B cell (primary cell): ENCODE measurements at regions of chr2 and their contacts with region 1.

Region 1: GRCh38 chr2:136135921-136136906 is 18.3 kb upstream of the CXCR4 start:
- DNase-seq: peak; percentile 94
- ATAC-seq: peak; percentile 50
- H3K4me3 ChIP-seq: peak overlapping the region in 3 of 5 experiments; percentile 10 to 33 (median 10)
- H3K4me3 Mint-ChIP-seq: peak overlapping the region; percentile 83
- H3K27ac ChIP-seq: peak overlapping the region; percentile 98 to 99
- H3K27ac Mint-ChIP-seq: peak overlapping the region; percentile 96
- H3K4me1 ChIP-seq: peaks cover 94 to 98% of the 10 kb centered on the region in 2 donors
- H3K4me1 Mint-ChIP-seq: peaks cover 92% of the 10 kb centered on the region
- H3K27me3 ChIP-seq: no peaks in the 10 kb centered on the region
- H3K27me3 Mint-ChIP-seq: no peaks in the 10 kb centered on the region
- CTCF ChIP-seq: no peak

Region 2: DNA sequence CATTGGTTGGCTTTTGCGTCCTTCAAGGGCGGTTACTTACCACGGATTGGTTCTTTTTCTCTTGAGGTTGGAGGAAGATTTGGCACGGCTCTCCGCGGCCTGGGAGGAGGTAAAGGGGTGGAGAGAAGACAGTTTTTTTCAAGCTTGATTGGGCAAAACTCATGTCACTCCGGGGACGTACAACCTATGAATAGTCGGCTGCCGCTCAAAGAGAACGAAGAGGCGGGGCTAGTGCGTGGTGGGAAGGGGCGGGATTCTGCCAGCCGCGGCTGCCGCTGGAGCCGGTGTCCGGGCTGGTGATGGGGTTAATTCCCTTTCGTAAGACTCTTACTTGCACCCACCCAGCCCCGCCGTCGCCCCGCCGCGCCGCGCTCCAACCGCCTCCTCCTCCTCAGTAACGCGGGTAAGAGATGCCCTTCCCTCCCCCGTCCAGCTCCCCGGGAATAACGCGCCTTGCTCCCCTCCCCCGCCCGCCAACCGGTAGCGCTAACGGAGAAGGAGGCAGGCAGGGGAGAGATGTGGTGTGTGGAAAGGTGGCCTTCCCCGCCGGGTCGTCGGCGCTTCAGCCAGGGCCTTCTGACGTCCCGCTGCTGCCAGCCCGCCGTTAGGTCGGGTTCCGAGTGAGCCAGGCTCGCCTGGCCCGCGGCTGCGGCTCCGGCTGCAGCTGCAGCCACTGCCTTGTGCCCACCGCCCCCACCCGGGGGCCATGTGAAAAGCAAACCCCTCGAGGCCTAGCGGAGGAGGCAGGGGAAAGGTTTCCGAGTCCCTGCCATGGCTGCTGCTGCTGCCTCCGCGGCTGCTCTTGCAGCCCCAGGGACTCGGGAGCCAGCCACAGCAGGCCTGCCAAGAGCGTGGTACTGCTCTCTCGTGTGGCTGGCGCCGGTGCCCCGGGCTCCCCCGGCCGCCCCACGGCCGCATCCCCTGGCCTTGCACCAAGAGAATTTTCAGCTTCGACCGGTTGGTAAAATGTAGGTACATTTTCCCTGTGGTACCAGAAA is 604.7 kb before region 1 on chr2 and contains the start of gene R3HDM1:
- CTCF ChIA-PET with region 1: no interaction called
- POLR2A ChIA-PET with region 1: no interaction called
- intact Hi-C with region 1: loop called (anchors 10 kb)
- DNase-seq: peak; percentile 99
- ATAC-seq: peak; percentile 79
- H3K4me3 ChIP-seq: peak within 1 kb of the TSS; percentile 81 to 100 (median 91)
- H3K4me3 Mint-ChIP-seq: no peak within 1 kb of the TSS
- H3K27ac ChIP-seq: peak within 1 kb of the TSS; percentile 86 to 88
- H3K27ac Mint-ChIP-seq: peak within 1 kb of the TSS; percentile 81
- H3K4me1 ChIP-seq: peaks cover 13 to 14% of the 10 kb centered on the region in 2 donors
- H3K4me1 Mint-ChIP-seq: peaks cover 12% of the 10 kb centered on the region
- H3K27me3 ChIP-seq: no peaks in the 10 kb centered on the region
- H3K27me3 Mint-ChIP-seq: no peaks in the 10 kb centered on the region
- CTCF ChIP-seq: peak; percentile 21
- total RNA-seq, gene R3HDM1: 52.0 and 57.8 TPM in 2 replicates

Region 3: DNA sequence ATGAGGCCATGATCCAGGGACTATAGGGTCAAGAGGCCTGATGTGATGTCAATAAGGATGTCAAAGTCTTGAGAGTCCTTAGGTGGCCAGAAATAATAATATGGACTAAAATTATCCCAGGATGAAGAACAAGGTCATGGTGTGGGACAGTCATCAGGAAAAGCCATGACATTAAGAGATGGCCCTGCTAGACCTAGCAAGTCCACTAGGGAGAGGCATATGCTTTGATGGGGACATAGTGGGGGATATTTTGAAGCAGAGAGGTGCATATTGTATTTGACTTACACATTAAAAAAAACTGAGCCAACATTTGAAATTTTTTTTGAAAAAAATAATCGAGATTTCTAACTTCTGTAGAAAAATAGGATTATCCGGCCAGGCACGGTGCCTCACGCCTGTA is 35.0 kb after region 1 on chr2:
- CTCF ChIA-PET with region 1: interaction called, 3 read pairs
- POLR2A ChIA-PET with region 1: interaction called, 4 read pairs
- intact Hi-C with region 1: loop called (anchors 5 kb)
- DNase-seq: no peak
- ATAC-seq: peak; percentile 39
- H3K4me3 ChIP-seq: no peak overlapping the region
- H3K4me3 Mint-ChIP-seq: no peak overlapping the region
- H3K27ac ChIP-seq: no peak overlapping the region
- H3K27ac Mint-ChIP-seq: peak overlapping the region; percentile 38
- H3K4me1 ChIP-seq: peaks cover 10 to 12% of the 10 kb centered on the region in 2 donors
- H3K4me1 Mint-ChIP-seq: peaks cover 40% of the 10 kb centered on the region
- H3K27me3 ChIP-seq: no peaks in the 10 kb centered on the region
- H3K27me3 Mint-ChIP-seq: no peaks in the 10 kb centered on the region
- CTCF ChIP-seq: no peak

Region 4: GRCh38 chr2:136212423-136213378 is 76.5 kb after region 1 on chr2:
- CTCF ChIA-PET with region 1: interaction called, 55 read pairs
- POLR2A ChIA-PET with region 1: interaction called, 218 read pairs
- intact Hi-C with region 1: loop called (anchors 1 kb)
- DNase-seq: peak; percentile 81
- ATAC-seq: peak; percentile 74
- H3K4me3 ChIP-seq: no peak overlapping the region
- H3K4me3 Mint-ChIP-seq: peak overlapping the region; percentile 74
- H3K27ac ChIP-seq: peak overlapping the region; percentile 53 to 99
- H3K27ac Mint-ChIP-seq: peak overlapping the region; percentile 81
- H3K4me1 ChIP-seq: peaks cover 80 to 81% of the 10 kb centered on the region in 2 donors
- H3K4me1 Mint-ChIP-seq: peaks cover 96% of the 10 kb centered on the region
- H3K27me3 ChIP-seq: no peaks in the 10 kb centered on the region
- H3K27me3 Mint-ChIP-seq: no peaks in the 10 kb centered on the region
- CTCF ChIP-seq: no peak

Region 5: GRCh38 chr2:136225950-136226835 is 90.0 kb after region 1 on chr2:
- CTCF ChIA-PET with region 1: interaction called, 15 read pairs
- POLR2A ChIA-PET with region 1: interaction called, 39 read pairs
- intact Hi-C with region 1: no loop called
- DNase-seq: peak; percentile 88
- ATAC-seq: peak; percentile 84
- H3K4me3 ChIP-seq: no peak overlapping the region
- H3K4me3 Mint-ChIP-seq: peak overlapping the region; percentile 42
- H3K27ac ChIP-seq: peak overlapping the region; percentile 62 to 75
- H3K27ac Mint-ChIP-seq: peak overlapping the region; percentile 95
- H3K4me1 ChIP-seq: peaks cover 46 to 54% of the 10 kb centered on the region in 2 donors
- H3K4me1 Mint-ChIP-seq: peaks cover 75% of the 10 kb centered on the region
- H3K27me3 ChIP-seq: no peaks in the 10 kb centered on the region
- H3K27me3 Mint-ChIP-seq: no peaks in the 10 kb centered on the region
- CTCF ChIP-seq: no peak

Region 6: GRCh38 chr2:136378712-136379595 is 242.7 kb after region 1 on chr2:
- CTCF ChIA-PET with region 1: interaction called, 21 read pairs
- POLR2A ChIA-PET with region 1: interaction called, 40 read pairs
- intact Hi-C with region 1: loop called (anchors 1 kb)
- DNase-seq: peak; percentile 90
- ATAC-seq: peak; percentile 29
- H3K4me3 ChIP-seq: peak overlapping the region in 1 of 5 experiments; percentile 8
- H3K4me3 Mint-ChIP-seq: peak overlapping the region; percentile 49
- H3K27ac ChIP-seq: peak overlapping the region in 1 of 2 donors; percentile 71
- H3K27ac Mint-ChIP-seq: peak overlapping the region; percentile 97
- H3K4me1 ChIP-seq: peaks cover 61 to 65% of the 10 kb centered on the region in 2 donors
- H3K4me1 Mint-ChIP-seq: peaks cover 81% of the 10 kb centered on the region
- H3K27me3 ChIP-seq: no peaks in the 10 kb centered on the region
- H3K27me3 Mint-ChIP-seq: no peaks in the 10 kb centered on the region
- CTCF ChIP-seq: peak; percentile 88